Naive thymus-derived CD4-positive, alpha-beta T cell (primary cell): ENCODE measurements at regions of chr16 and their contacts with region 1.

Region 1: GRCh38 chr16:11535471-11535870 is 51.2 kb downstream of the LITAF start:
- DNase-seq: no peak
- ATAC-seq: no peak
- H3K4me3 ChIP-seq: no peak overlapping the region
- H3K4me3 Mint-ChIP-seq: no peak overlapping the region
- H3K27ac ChIP-seq: no peak overlapping the region
- H3K27ac Mint-ChIP-seq: peak overlapping the region in 1 of 9 donors; percentile 26
- H3K4me1 ChIP-seq: peaks cover 4 to 10% of the 10 kb centered on the region in 2 donors
- H3K4me1 Mint-ChIP-seq: peaks cover 8 to 23% (median 19%) of the 10 kb centered on the region in 7 donors
- H3K27me3 ChIP-seq: no peaks in the 10 kb centered on the region
- H3K27me3 Mint-ChIP-seq: peaks cover 0 to 4% (median 0%) of the 10 kb centered on the region in 5 donors

Region 2: DNA sequence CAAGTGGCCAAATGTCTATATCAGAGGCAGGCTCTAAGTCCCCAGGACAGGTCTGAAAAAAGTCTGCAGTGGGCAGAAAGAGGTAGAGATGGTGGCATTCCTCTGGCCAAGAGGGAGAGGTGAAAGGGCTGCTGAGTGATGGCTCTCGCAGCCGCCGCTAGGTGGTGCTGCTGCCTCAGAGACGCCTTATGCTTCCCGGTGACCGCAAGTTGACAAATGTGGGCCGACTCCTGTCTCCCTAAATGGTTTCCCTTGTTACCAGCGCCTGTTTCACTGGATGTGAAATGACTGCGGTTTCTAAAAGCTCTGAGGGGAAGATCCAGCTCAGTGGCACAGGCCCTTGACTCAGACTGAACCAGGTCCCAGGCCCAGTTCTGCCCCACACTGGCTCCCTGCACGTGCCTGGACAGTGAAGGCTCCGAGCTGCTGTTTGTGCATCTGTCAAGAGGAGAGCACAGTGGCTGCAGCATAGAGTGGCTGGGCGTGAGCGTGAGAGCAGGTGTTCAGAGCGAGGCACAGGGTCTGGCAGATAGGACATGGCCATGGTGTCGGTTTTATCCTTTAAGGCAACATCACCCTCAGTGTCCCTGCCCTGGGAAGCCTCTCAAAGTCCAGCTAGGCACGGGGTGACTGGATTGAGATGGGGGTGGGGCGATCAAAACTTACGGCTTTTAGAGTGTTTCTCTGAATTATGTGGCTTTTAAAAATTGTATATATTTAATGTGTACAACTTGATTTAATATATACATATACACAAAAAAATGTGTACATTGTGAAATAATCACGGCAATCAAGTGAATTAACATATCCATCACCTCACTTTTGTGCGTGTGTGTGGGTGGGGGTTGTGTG is 571.2 kb before region 1 on chr16:
- CTCF ChIA-PET with region 1: no interaction called
- POLR2A ChIA-PET with region 1: no interaction called
- intact Hi-C with region 1: loop called (anchors 1 to 5 kb)
- DNase-seq: peak; percentile 55 to 84 (median 69)
- ATAC-seq: peak; percentile 81
- H3K4me3 ChIP-seq: peak overlapping the region; percentile 3
- H3K4me3 Mint-ChIP-seq: peak overlapping the region in 6 of 10 donors; percentile 4 to 83 (median 52)
- H3K27ac ChIP-seq: no peak overlapping the region
- H3K27ac Mint-ChIP-seq: peak overlapping the region in 6 of 9 donors; percentile 47 to 91 (median 72)
- H3K4me1 ChIP-seq: peaks cover 11 to 18% of the 10 kb centered on the region in 2 donors
- H3K4me1 Mint-ChIP-seq: peaks cover 15 to 62% (median 28%) of the 10 kb centered on the region in 7 donors
- H3K27me3 ChIP-seq: no peaks in the 10 kb centered on the region
- H3K27me3 Mint-ChIP-seq: no peaks in the 10 kb centered on the region

Region 3: GRCh38 chr16:11407047-11407982 is 128.2 kb before region 1 on chr16:
- CTCF ChIA-PET with region 1: interaction called, 3 read pairs
- POLR2A ChIA-PET with region 1: no interaction called
- intact Hi-C with region 1: loop called in 1 of 2 experiments (anchors 5 kb)
- DNase-seq: peak; percentile 44 to 78 (median 66)
- ATAC-seq: peak; percentile 85
- H3K4me3 ChIP-seq: no peak overlapping the region
- H3K4me3 Mint-ChIP-seq: no peak overlapping the region
- H3K27ac ChIP-seq: no peak overlapping the region
- H3K27ac Mint-ChIP-seq: peak overlapping the region in 2 of 9 donors; percentile 16 to 72
- H3K4me1 ChIP-seq: no peaks in the 10 kb centered on the region
- H3K4me1 Mint-ChIP-seq: peaks cover 0 to 5% (median 4%) of the 10 kb centered on the region in 7 donors
- H3K27me3 ChIP-seq: no peaks in the 10 kb centered on the region
- H3K27me3 Mint-ChIP-seq: no peaks in the 10 kb centered on the region

Region 4: GRCh38 chr16:11431915-11432465 is 103.5 kb before region 1 on chr16:
- CTCF ChIA-PET with region 1: no interaction called
- POLR2A ChIA-PET with region 1: no interaction called
- intact Hi-C with region 1: no loop called
- DNase-seq: no peak
- ATAC-seq: no peak
- H3K4me3 ChIP-seq: no peak overlapping the region
- H3K4me3 Mint-ChIP-seq: no peak overlapping the region
- H3K27ac ChIP-seq: no peak overlapping the region
- H3K27ac Mint-ChIP-seq: peak overlapping the region in 1 of 9 donors; percentile 13
- H3K4me1 ChIP-seq: no peaks in the 10 kb centered on the region
- H3K4me1 Mint-ChIP-seq: no peaks in the 10 kb centered on the region
- H3K27me3 ChIP-seq: no peaks in the 10 kb centered on the region
- H3K27me3 Mint-ChIP-seq: peaks cover 0 to 2% (median 0%) of the 10 kb centered on the region in 5 donors

Region 5: GRCh38 chr16:11560701-11561449 is 25.4 kb after region 1 on chr16:
- CTCF ChIA-PET with region 1: interaction called, 22 read pairs
- POLR2A ChIA-PET with region 1: interaction called, 3 read pairs
- intact Hi-C with region 1: loop called (anchors 1 to 2 kb)
- DNase-seq: peak; percentile 41 to 92 (median 89)
- ATAC-seq: peak; percentile 92
- H3K4me3 ChIP-seq: peak overlapping the region; percentile 56
- H3K4me3 Mint-ChIP-seq: peak overlapping the region; percentile 79 to 97 (median 84)
- H3K27ac ChIP-seq: peak overlapping the region; percentile 89
- H3K27ac Mint-ChIP-seq: peak overlapping the region; percentile 92 to 99 (median 99)
- H3K4me1 ChIP-seq: peaks cover 70 to 85% of the 10 kb centered on the region in 2 donors
- H3K4me1 Mint-ChIP-seq: peaks cover 43 to 92% (median 78%) of the 10 kb centered on the region in 7 donors
- H3K27me3 ChIP-seq: no peaks in the 10 kb centered on the region
- H3K27me3 Mint-ChIP-seq: peaks cover 0 to 2% (median 0%) of the 10 kb centered on the region in 5 donors

Region 6: DNA sequence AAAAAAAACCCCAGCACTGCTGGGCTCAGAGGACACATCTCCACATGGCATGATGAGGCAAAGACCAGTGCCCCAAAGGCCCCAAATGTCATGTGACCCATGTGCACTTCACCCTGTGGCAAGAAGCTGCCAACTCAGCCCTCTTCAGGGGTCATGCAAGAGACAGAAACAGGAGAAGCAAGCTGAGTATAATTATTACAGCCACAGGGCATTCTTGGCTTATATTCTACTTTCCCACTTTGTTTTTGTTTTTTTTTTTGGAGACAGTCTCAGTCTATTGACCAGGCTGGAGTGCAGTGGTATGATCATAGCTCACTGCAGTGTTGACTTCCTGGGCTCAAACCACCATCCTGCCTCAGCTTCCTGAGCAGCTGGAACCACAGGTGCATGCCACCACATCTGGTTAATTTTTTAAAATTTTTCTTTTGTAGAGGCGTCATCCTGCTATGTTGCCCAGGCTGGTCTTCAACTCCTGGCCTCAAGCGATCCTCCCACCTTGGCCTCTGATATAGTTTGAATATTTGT is 83.9 kb after region 1 on chr16:
- CTCF ChIA-PET with region 1: interaction called, 5 read pairs
- POLR2A ChIA-PET with region 1: interaction called, 8 read pairs
- intact Hi-C with region 1: loop called in 1 of 2 experiments (anchors 1 kb)
- DNase-seq: peak in 5 of 9 donors; percentile 39 to 54 (median 52)
- ATAC-seq: peak; percentile 75
- H3K4me3 ChIP-seq: peak overlapping the region; percentile 47
- H3K4me3 Mint-ChIP-seq: peak overlapping the region; percentile 68 to 95 (median 76)
- H3K27ac ChIP-seq: peak overlapping the region; percentile 77
- H3K27ac Mint-ChIP-seq: peak overlapping the region; percentile 76 to 100 (median 98)
- H3K4me1 ChIP-seq: peaks cover 52 to 71% of the 10 kb centered on the region in 2 donors
- H3K4me1 Mint-ChIP-seq: peaks cover 52 to 92% (median 60%) of the 10 kb centered on the region in 7 donors
- H3K27me3 ChIP-seq: no peaks in the 10 kb centered on the region
- H3K27me3 Mint-ChIP-seq: no peaks in the 10 kb centered on the region

Region 7: GRCh38 chr16:11715246-11715947 is 179.9 kb after region 1 on chr16:
- CTCF ChIA-PET with region 1: interaction called, 53 read pairs
- POLR2A ChIA-PET with region 1: interaction called, 4 read pairs
- intact Hi-C with region 1: loop called (anchors 1 kb)
- DNase-seq: no peak
- ATAC-seq: no peak
- H3K4me3 ChIP-seq: no peak overlapping the region
- H3K4me3 Mint-ChIP-seq: no peak overlapping the region
- H3K27ac ChIP-seq: no peak overlapping the region
- H3K27ac Mint-ChIP-seq: peak overlapping the region in 5 of 9 donors; percentile 6 to 79 (median 48)
- H3K4me1 ChIP-seq: peaks cover 0 to 3% of the 10 kb centered on the region in 2 donors
- H3K4me1 Mint-ChIP-seq: peaks cover 4 to 38% (median 22%) of the 10 kb centered on the region in 7 donors
- H3K27me3 ChIP-seq: no peaks in the 10 kb centered on the region
- H3K27me3 Mint-ChIP-seq: no peaks in the 10 kb centered on the region

Region 8: GRCh38 chr16:11816103-11816502 is 280.6 kb after region 1 on chr16:
- CTCF ChIA-PET with region 1: interaction called, 7 read pairs
- POLR2A ChIA-PET with region 1: no interaction called
- intact Hi-C with region 1: loop called (anchors 1 kb)
- DNase-seq: no peak
- ATAC-seq: no peak
- H3K4me3 ChIP-seq: no peak overlapping the region
- H3K4me3 Mint-ChIP-seq: no peak overlapping the region
- H3K27ac ChIP-seq: no peak overlapping the region
- H3K27ac Mint-ChIP-seq: no peak overlapping the region
- H3K4me1 ChIP-seq: no peaks in the 10 kb centered on the region
- H3K4me1 Mint-ChIP-seq: peaks cover 0 to 6% (median 3%) of the 10 kb centered on the region in 7 donors
- H3K27me3 ChIP-seq: no peaks in the 10 kb centered on the region
- H3K27me3 Mint-ChIP-seq: no peaks in the 10 kb centered on the region

Region 9: GRCh38 chr16:11857161-11857560 is 321.7 kb after region 1 on chr16:
- CTCF ChIA-PET with region 1: no interaction called
- POLR2A ChIA-PET with region 1: no interaction called
- intact Hi-C with region 1: no loop called
- DNase-seq: no peak
- ATAC-seq: no peak
- H3K4me3 ChIP-seq: no peak overlapping the region
- H3K4me3 Mint-ChIP-seq: no peak overlapping the region
- H3K27ac ChIP-seq: no peak overlapping the region
- H3K27ac Mint-ChIP-seq: peak overlapping the region in 1 of 9 donors; percentile 0
- H3K4me1 ChIP-seq: peaks cover 10 to 14% of the 10 kb centered on the region in 2 donors
- H3K4me1 Mint-ChIP-seq: peaks cover 22 to 53% (median 39%) of the 10 kb centered on the region in 7 donors
- H3K27me3 ChIP-seq: no peaks in the 10 kb centered on the region
- H3K27me3 Mint-ChIP-seq: no peaks in the 10 kb centered on the region

Region 10: DNA sequence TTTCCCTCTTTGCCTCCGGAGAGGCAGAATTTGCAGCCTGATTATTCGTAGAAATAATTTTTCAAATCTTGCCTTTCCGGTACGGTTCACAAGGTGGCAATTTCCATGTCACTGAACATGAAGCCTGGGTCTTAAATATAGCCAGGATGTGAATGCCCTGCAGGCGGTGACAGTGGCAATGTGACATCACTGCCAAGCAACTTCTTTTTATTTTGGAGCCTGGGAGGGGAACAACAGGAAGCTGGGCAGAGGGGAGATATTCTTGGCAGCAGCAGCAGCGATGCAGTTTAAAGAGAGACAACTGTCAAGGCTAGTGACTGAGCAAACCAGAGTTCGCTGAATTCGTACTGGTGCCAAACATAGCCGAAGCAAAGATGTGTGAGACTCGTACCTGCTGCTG is 612.2 kb after region 1 on chr16:
- CTCF ChIA-PET with region 1: no interaction called
- POLR2A ChIA-PET with region 1: no interaction called
- intact Hi-C with region 1: no loop called
- DNase-seq: peak in 7 of 9 donors; percentile 33 to 70 (median 60)
- ATAC-seq: no peak
- H3K4me3 ChIP-seq: no peak overlapping the region
- H3K4me3 Mint-ChIP-seq: peak overlapping the region in 9 of 10 donors; percentile 10 to 73 (median 58)
- H3K27ac ChIP-seq: peak overlapping the region; percentile 15
- H3K27ac Mint-ChIP-seq: peak overlapping the region in 8 of 9 donors; percentile 47 to 94 (median 86)
- H3K4me1 ChIP-seq: peaks cover 0 to 16% of the 10 kb centered on the region in 2 donors
- H3K4me1 Mint-ChIP-seq: peaks cover 7 to 50% (median 36%) of the 10 kb centered on the region in 7 donors
- H3K27me3 ChIP-seq: no peaks in the 10 kb centered on the region
- H3K27me3 Mint-ChIP-seq: no peaks in the 10 kb centered on the region